GM23248 (cell line): ENCODE measurements at regions of chr1 and their contacts with region 1.

Region 1: GRCh38 chr1:5975133-5975880 is 16.9 kb downstream of the NPHP4 start:
- DNase-seq: peak; percentile 75
- H3K4me3 ChIP-seq: no peak overlapping the region
- H3K27ac ChIP-seq: no peak overlapping the region
- H3K4me1 ChIP-seq: peaks cover 2% of the 10 kb centered on the region; the same call in 1 of the 2 replicates
- H3K27me3 ChIP-seq: no peaks in the 10 kb centered on the region

Region 2: GRCh38 chr1:5514519-5515183 is 460.7 kb before region 1 on chr1:
- in situ Hi-C with region 1: loop called (anchors 10 kb)
- DNase-seq: peak; percentile 48
- H3K4me3 ChIP-seq: no peak overlapping the region
- H3K27ac ChIP-seq: no peak overlapping the region
- H3K4me1 ChIP-seq: no peaks in the 10 kb centered on the region
- H3K27me3 ChIP-seq: no peaks in the 10 kb centered on the region